Mammary epithelial cell (primary cell): ENCODE measurements at regions of chr1 and their contacts with region 1.

Region 1: DNA sequence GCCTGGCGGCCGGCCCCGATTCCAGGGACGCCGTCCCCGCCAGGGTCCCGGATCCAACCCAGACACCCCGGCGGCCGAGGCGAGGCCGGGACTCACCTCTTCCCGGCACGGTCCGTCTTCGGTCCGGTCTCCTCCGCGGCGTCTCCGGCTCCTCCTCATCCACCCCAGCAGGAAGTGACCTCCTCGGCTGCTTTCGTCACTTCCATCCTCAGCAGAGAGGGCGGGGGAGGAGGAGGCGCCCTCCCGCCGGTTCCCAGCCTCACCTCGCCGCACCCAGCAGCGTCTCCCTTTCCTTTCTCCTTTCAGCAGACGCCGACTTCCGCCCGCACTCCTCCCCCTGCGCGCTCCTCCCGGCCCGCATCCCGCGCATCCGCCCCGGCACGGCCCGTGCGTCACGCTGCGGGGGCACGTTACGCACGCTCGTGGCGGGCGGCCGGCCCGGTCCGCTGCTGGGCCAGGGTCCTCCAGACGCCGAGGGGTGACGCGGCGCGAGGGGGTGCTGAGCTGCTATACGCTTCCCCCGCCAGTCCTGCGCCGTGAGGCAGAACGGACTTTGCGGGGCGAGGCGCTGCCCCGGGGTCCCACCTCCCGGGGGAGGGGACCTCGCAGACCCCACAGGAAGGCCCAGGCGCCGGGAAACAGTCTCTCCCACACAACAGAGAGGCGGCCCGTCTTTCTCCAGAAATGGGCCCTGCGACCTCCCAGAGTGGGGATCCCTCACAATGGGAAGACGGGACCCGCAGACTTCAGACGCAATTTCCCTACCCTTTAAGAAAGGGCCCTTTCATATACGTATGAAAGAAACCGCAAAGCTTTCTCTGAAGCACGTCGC is at the start of gene ETV3:
- DNase-seq: peak; percentile 95
- H3K4me3 ChIP-seq: peak within 1 kb of the TSS; percentile 91 to 96 (median 93)
- H3K27ac ChIP-seq: peak within 1 kb of the TSS; percentile 81
- H3K4me1 ChIP-seq: peaks cover 40% of the 10 kb centered on the region
- H3K27me3 ChIP-seq: no peaks in the 10 kb centered on the region
- CTCF ChIP-seq: no peak
- total RNA-seq, gene ETV3: 20.5 to 34.1 TPM

Region 2: GRCh38 chr1:157034137-157034800 is 104.2 kb before region 1 on chr1:
- CTCF ChIA-PET with region 1: no interaction called
- dilution Hi-C with region 1: loop called (anchors 5 kb)
- in situ Hi-C with region 1: no loop called
- intact Hi-C with region 1: no loop called
- DNase-seq: peak; percentile 13
- H3K4me3 ChIP-seq: no peak overlapping the region
- H3K27ac ChIP-seq: no peak overlapping the region
- H3K4me1 ChIP-seq: no peaks in the 10 kb centered on the region
- H3K27me3 ChIP-seq: no peaks in the 10 kb centered on the region
- CTCF ChIP-seq: no peak

Region 3: DNA sequence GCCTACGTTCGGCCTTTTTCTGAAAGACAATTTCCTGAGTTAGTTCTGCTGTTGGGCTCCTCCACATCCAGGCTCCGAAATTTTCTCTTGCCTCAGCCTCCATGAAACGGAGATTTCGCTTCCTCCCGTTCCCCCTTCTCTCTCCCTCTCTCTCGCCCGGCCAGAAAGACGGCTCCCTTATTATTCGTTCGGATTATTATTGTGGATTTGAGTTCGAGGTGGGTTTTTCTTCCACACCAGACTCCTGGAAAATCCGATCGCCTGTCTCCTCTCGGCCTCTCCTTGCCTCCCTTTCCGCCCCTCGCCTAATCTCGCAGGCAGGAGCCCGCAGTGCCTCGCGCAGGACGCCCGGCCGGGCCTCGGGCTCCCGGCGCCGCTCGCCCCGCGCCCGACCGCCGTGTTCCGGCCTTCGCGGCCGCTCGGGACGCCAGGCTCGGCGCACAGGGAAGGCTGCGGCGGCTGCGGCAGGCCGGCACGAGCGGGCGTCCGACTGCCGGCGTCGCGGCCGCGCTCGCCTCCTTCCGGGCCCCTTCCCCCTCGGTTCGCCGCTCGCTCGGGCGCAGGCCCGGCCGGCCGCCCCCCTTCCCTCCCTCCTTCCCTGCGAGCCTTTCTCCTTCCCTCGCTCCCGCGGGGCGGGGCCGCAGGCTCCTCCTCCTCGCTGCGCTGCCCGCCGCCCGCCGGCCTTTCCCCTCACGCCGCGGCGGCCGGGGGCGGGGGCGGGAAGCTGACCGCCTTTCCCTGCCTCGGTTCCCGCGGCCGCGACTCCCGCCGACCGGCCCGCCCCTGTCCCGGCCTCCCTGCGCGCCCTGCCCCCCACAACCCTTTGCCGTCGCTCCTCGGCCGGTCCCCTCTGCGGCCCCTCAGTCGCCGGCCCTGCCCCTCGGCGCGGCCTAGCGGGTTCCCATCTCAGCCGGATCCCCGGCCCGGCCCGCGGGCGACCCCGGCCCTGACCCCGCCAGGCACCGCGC is 92.9 kb before region 1 on chr1 and contains the start of gene ARHGEF11:
- CTCF ChIA-PET with region 1: no interaction called
- dilution Hi-C with region 1: no loop called
- in situ Hi-C with region 1: no loop called
- intact Hi-C with region 1: no loop called
- DNase-seq: peak; percentile 84
- H3K4me3 ChIP-seq: peak within 1 kb of the TSS; percentile 59 to 93 (median 71)
- H3K27ac ChIP-seq: peak within 1 kb of the TSS; percentile 67
- H3K4me1 ChIP-seq: peaks cover 15% of the 10 kb centered on the region
- H3K27me3 ChIP-seq: peaks cover 1% of the 10 kb centered on the region
- CTCF ChIP-seq: no peak
- total RNA-seq, gene ARHGEF11: 23.4 to 26.5 TPM

Region 4: GRCh38 chr1:157090196-157090647 is 48.2 kb before region 1 on chr1:
- CTCF ChIA-PET with region 1: interaction called, 8 read pairs
- dilution Hi-C with region 1: no loop called
- in situ Hi-C with region 1: no loop called
- intact Hi-C with region 1: loop called (anchors 1 kb)
- DNase-seq: peak; percentile 60
- H3K4me3 ChIP-seq: no peak overlapping the region
- H3K27ac ChIP-seq: no peak overlapping the region
- H3K4me1 ChIP-seq: peaks cover 10% of the 10 kb centered on the region
- H3K27me3 ChIP-seq: no peaks in the 10 kb centered on the region
- CTCF ChIP-seq: peak; percentile 88 to 94

Region 5: DNA sequence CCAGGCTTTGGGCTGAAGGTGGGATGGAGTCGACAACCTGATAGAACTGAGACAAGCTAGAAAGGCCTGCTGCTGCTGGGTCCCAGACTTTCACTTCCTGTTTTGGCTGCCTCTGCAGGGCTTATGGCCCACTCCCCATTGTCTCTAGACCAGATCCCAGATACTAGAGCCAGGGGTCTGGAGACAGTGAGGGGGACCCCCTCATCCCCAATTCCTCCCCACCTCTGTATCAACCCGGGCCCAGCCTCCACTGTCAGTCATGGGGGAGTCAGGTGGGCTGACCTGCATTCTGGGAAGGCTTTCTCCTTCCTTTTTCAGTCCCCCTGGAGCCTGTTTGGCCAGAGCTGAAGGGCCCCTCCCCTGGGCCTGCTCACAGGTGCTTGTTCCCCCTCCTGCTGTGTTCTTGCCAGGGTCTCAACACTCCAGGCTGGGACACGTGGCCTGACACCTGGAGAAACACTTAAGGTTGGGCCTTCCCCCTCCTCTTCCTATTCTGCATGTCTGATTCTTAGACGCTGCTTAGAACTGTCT is 20.8 kb before region 1 on chr1:
- CTCF ChIA-PET with region 1: no interaction called
- dilution Hi-C with region 1: no loop called
- in situ Hi-C with region 1: no loop called
- intact Hi-C with region 1: loop called (anchors 2 kb)
- DNase-seq: no peak
- H3K4me3 ChIP-seq: no peak overlapping the region
- H3K27ac ChIP-seq: no peak overlapping the region
- H3K4me1 ChIP-seq: no peaks in the 10 kb centered on the region
- H3K27me3 ChIP-seq: no peaks in the 10 kb centered on the region
- CTCF ChIP-seq: no peak

Region 6: DNA sequence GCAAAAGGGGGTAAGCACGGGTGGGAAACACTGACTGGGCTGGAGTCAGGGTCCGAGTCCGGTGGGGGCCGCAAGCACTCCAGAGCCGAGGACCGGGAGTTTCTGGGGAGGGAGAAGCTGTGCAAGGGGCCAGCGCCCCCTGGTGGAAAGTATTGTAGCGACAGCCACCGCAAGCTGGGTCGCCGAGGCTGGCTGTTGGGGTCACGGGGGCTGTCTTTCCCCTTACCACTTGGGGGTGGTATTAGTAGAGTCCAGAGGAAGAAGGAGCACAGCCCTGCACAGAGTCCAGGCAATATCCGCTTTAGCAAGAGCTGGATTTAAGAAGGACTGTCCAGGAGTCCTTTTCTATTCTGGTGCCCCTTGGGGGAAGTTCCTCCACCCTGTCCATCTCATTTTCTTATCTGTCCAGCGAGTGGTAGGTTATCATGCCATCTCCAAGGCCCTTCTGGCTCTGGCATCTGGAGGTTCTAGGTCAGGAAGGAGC is 17.7 kb after region 1 on chr1:
- CTCF ChIA-PET with region 1: interaction called, 7 read pairs
- dilution Hi-C with region 1: no loop called
- in situ Hi-C with region 1: no loop called
- intact Hi-C with region 1: loop called (anchors 1 kb)
- DNase-seq: peak; percentile 27
- H3K4me3 ChIP-seq: no peak overlapping the region
- H3K27ac ChIP-seq: no peak overlapping the region
- H3K4me1 ChIP-seq: peaks cover 39% of the 10 kb centered on the region
- H3K27me3 ChIP-seq: no peaks in the 10 kb centered on the region
- CTCF ChIP-seq: peak; percentile 71 to 94